ENCODE measurements at regions of chr1 and their contacts with region 1.

Region 1: DNA sequence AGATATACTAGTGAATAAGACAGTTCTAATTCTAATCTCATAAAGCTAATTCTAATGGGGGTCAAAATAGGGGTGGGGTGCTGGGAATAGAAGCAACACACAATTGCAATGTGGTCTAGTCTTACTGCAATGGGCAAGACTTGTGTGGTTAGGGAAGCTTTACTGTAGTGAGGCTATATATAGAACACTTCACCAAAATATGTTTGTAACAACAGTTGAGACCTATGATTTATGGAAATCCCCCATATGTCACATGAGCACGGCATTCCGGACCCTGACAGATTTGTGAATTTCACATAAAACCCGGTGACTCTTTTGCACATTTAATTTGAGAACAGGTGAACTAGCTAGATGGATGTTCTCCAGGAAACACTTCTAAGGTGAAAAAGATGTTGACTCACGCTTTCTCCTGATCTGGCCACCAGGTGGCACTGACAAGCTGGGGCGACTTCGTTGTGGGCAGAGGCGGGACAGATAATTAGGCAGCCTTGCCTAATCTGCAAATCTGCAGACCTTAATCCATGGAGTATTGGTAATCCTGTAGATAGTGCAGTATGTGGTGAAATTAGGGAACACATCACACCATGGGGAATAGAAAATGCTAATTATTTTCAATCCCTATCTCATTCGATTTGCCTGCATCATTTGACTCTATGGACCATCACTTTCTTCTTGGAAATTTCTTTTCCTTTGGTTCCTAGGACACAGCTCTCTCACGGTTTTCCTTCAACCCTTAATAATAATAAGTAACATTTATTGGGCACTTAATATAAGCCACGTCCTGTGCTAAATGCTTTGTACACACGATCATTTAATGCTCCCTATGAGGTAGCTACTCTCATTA is 37.7 kb downstream of the KIAA0040 start:
- DNase-seq: peak; percentile 45 to 57
- ATAC-seq: peak; percentile 52 to 71; a peak in 4 of 6 replicates
- H3K4me3 ChIP-seq: no peak overlapping the region
- H3K27ac ChIP-seq: no peak overlapping the region
- H3K4me1 ChIP-seq: no peaks in the 10 kb centered on the region
- CTCF ChIP-seq: peak; percentile 84
- EP300 ChIP-seq: no peak
- POLR2A ChIP-seq: no peak
- RAD21 ChIP-seq: peak; percentile 71 to 73

Region 2: GRCh38 chr1:174800216-174800851 is 354.5 kb before region 1 on chr1:
- CTCF ChIA-PET with region 1: no interaction called
- POLR2A ChIA-PET with region 1: no interaction called
- DNase-seq: no peak
- ATAC-seq: peak in 1 of 2 experiments; percentile 10; a peak in 1 of 6 replicates
- H3K4me3 ChIP-seq: no peak overlapping the region
- H3K27ac ChIP-seq: no peak overlapping the region; a peak in 1 of 6 replicates
- H3K4me1 ChIP-seq: peaks cover 19% of the 10 kb centered on the region; the same call in 1 of the 3 replicates
- CTCF ChIP-seq: no peak
- EP300 ChIP-seq: no peak
- POLR2A ChIP-seq: no peak
- RAD21 ChIP-seq: no peak

Region 3: DNA sequence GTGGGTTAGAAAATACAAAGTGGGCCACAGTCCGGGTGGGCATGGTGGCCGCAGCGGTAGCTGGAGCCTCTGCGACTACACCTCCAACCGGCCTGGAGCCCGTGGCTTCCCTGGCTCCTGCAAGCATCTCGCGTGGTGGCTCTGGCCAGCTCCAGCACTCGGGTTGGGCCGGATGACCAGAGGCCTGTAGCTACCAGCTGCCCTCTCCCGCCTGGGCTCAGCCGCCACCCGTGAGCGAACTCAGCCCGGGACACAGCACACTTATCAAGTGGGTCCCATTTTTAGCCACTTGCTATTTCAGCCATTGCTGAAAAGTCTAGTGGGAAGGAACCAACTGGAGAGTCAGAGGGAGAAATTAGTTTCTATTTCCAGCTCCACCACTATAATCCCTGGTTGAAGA is 262.8 kb before region 1 on chr1:
- CTCF ChIA-PET with region 1: no interaction called
- POLR2A ChIA-PET with region 1: no interaction called
- DNase-seq: no peak
- ATAC-seq: no peak
- H3K4me3 ChIP-seq: no peak overlapping the region
- H3K27ac ChIP-seq: no peak overlapping the region
- H3K4me1 ChIP-seq: no peaks in the 10 kb centered on the region
- CTCF ChIP-seq: no peak
- EP300 ChIP-seq: no peak
- POLR2A ChIP-seq: no peak
- RAD21 ChIP-seq: no peak

Region 4: GRCh38 chr1:174902531-174903099 is 252.2 kb before region 1 on chr1:
- CTCF ChIA-PET with region 1: no interaction called
- POLR2A ChIA-PET with region 1: no interaction called
- DNase-seq: no peak
- ATAC-seq: no peak
- H3K4me3 ChIP-seq: no peak overlapping the region
- H3K27ac ChIP-seq: no peak overlapping the region
- H3K4me1 ChIP-seq: no peaks in the 10 kb centered on the region
- CTCF ChIP-seq: no peak
- EP300 ChIP-seq: no peak
- POLR2A ChIP-seq: no peak
- RAD21 ChIP-seq: no peak

Region 5: GRCh38 chr1:175169305-175170018 is 14.6 kb after region 1 on chr1:
- CTCF ChIA-PET with region 1: interaction called, 89 read pairs
- POLR2A ChIA-PET with region 1: no interaction called
- DNase-seq: no peak
- ATAC-seq: no peak
- H3K4me3 ChIP-seq: no peak overlapping the region
- H3K27ac ChIP-seq: no peak overlapping the region
- H3K4me1 ChIP-seq: no peaks in the 10 kb centered on the region
- CTCF ChIP-seq: no peak
- EP300 ChIP-seq: no peak
- POLR2A ChIP-seq: no peak
- RAD21 ChIP-seq: no peak

Region 6: GRCh38 chr1:175174309-175175165 is 19.7 kb after region 1 on chr1:
- CTCF ChIA-PET with region 1: interaction called, 12 read pairs
- POLR2A ChIA-PET with region 1: no interaction called
- DNase-seq: no peak
- ATAC-seq: no peak
- H3K4me3 ChIP-seq: no peak overlapping the region
- H3K27ac ChIP-seq: no peak overlapping the region
- H3K4me1 ChIP-seq: no peaks in the 10 kb centered on the region
- CTCF ChIP-seq: no peak
- EP300 ChIP-seq: no peak
- POLR2A ChIP-seq: no peak
- RAD21 ChIP-seq: no peak

Region 7: DNA sequence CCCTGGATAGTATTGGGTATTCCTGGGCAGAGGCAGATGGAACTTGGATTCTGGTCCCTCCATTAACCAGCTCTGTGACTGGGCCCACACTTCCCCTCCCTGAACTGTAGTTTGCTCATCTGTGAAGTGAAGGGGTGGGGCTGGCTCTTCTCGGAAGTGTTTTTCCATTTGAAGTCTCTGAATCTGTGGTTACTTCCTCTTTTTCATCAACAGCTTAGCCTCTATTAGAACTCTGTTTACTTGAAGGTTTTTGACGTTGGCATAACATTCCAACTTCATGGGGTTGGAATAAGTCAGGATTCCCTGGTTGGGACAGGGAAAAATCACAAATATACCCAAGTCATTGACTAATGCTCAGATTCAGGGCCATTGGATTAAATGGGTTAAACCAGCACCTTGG is 34.1 kb after region 1 on chr1:
- CTCF ChIA-PET with region 1: interaction called, 19 read pairs
- POLR2A ChIA-PET with region 1: no interaction called
- DNase-seq: no peak
- ATAC-seq: no peak
- H3K4me3 ChIP-seq: no peak overlapping the region
- H3K27ac ChIP-seq: no peak overlapping the region
- H3K4me1 ChIP-seq: 0 out of 3 replicates have a peak, but pooled peaks cover 4% of the 10 kb centered on the region
- CTCF ChIP-seq: no peak
- EP300 ChIP-seq: no peak
- POLR2A ChIP-seq: no peak
- RAD21 ChIP-seq: no peak

Region 8: GRCh38 chr1:175319418-175320230 is 164.8 kb after region 1 on chr1:
- CTCF ChIA-PET with region 1: interaction called, 100 read pairs
- POLR2A ChIA-PET with region 1: no interaction called
- DNase-seq: peak; percentile 59 to 71
- ATAC-seq: peak; percentile 89 to 98
- H3K4me3 ChIP-seq: no peak overlapping the region
- H3K27ac ChIP-seq: no peak overlapping the region
- H3K4me1 ChIP-seq: no peaks in the 10 kb centered on the region
- CTCF ChIP-seq: peak; percentile 75
- EP300 ChIP-seq: no peak
- POLR2A ChIP-seq: no peak
- RAD21 ChIP-seq: peak; percentile 66 to 76

Region 9: DNA sequence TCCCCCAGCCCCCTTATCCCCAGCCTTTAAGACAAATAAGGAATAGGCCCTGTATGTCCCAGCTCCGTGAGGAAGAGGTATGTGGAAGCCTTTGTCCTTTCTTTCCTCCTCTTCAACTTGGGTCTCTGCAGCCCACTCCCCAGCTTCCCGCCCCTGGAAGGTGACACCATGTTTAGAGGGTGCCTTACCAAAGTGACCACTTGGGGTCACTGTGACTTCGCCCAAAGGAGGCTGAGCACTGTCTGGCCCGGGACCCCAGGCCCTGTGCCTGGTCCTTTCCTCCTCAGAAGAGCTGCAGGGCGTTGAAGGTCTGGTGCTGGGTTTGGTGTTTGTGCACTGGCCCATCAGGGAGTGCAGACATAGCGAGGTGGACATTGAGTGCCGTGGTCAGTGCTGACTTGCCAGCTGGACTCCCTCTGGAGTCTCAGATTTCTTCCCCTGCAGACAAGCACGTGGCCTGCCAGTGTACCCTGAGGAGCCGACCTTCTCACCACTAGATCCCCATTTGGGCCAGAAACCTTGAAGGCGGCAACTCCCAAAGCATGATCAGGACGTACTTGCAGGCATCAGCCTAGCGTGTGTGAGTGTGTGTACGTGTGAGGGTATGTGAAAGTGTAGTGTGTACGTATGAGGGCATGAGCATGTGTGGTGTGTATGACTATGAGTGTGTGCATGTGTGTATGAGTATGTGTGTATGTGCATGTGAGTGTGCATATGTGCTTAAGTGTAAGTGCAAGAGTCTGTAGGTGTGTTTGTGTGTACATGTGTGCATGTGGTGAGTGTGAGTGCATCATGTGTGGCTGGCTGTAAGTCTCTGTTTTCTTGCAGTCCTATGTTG is 219.2 kb after region 1 on chr1:
- CTCF ChIA-PET with region 1: interaction called, 10 read pairs
- POLR2A ChIA-PET with region 1: no interaction called
- DNase-seq: peak; percentile 12 to 29
- ATAC-seq: peak; percentile 77 to 92
- H3K4me3 ChIP-seq: no peak overlapping the region
- H3K27ac ChIP-seq: no peak overlapping the region
- H3K4me1 ChIP-seq: no peaks in the 10 kb centered on the region
- CTCF ChIP-seq: peak; percentile 55
- EP300 ChIP-seq: no peak
- POLR2A ChIP-seq: no peak
- RAD21 ChIP-seq: peak; percentile 67 to 73